Naive thymus-derived CD4-positive, alpha-beta T cell (primary cell): ENCODE measurements at regions of chr5 and their contacts with region 1.

Region 1: GRCh38 chr5:78182790-78183189 is 111.7 kb downstream of the AP3B1 start:
- DNase-seq: no peak
- ATAC-seq: no peak
- H3K4me3 ChIP-seq: no peak overlapping the region
- H3K4me3 Mint-ChIP-seq: no peak overlapping the region
- H3K27ac ChIP-seq: no peak overlapping the region
- H3K27ac Mint-ChIP-seq: no peak overlapping the region
- H3K4me1 ChIP-seq: no peaks in the 10 kb centered on the region
- H3K4me1 Mint-ChIP-seq: peaks cover 3 to 16% (median 7%) of the 10 kb centered on the region in 7 donors
- H3K27me3 ChIP-seq: no peaks in the 10 kb centered on the region
- H3K27me3 Mint-ChIP-seq: no peaks in the 10 kb centered on the region

Region 2: DNA sequence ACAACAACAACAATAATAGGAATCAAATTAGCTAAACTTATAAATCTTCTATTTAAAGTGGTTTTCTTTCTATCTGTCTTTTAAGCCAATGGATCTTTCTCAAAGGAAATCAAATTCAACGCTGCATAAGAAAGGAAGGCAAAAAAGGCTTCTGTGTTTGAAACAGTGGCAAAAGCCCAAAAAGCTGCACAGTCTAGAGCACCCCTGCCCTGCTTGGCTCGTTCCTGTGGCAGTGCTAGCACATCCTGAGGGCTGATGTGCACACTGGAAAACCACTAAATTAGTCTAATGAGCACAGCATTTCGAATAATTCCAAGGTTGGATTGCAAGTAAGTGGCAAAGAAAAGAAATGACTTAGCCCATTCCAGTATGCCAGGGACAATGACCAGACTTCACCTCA is 31.0 kb after region 1 on chr5:
- CTCF ChIA-PET with region 1: no interaction called
- POLR2A ChIA-PET with region 1: no interaction called
- intact Hi-C with region 1: loop called in 1 of 2 experiments (anchors 1 kb)
- DNase-seq: no peak
- ATAC-seq: no peak
- H3K4me3 ChIP-seq: no peak overlapping the region
- H3K4me3 Mint-ChIP-seq: no peak overlapping the region
- H3K27ac ChIP-seq: no peak overlapping the region
- H3K27ac Mint-ChIP-seq: no peak overlapping the region
- H3K4me1 ChIP-seq: no peaks in the 10 kb centered on the region
- H3K4me1 Mint-ChIP-seq: peaks cover 0 to 2% (median 0%) of the 10 kb centered on the region in 7 donors
- H3K27me3 ChIP-seq: no peaks in the 10 kb centered on the region
- H3K27me3 Mint-ChIP-seq: no peaks in the 10 kb centered on the region

Region 3: GRCh38 chr5:78430866-78431265 is 248.1 kb after region 1 on chr5:
- CTCF ChIA-PET with region 1: no interaction called
- POLR2A ChIA-PET with region 1: no interaction called
- intact Hi-C with region 1: no loop called
- DNase-seq: no peak
- ATAC-seq: no peak
- H3K4me3 ChIP-seq: no peak overlapping the region
- H3K4me3 Mint-ChIP-seq: no peak overlapping the region
- H3K27ac ChIP-seq: no peak overlapping the region
- H3K27ac Mint-ChIP-seq: no peak overlapping the region
- H3K4me1 ChIP-seq: no peaks in the 10 kb centered on the region
- H3K4me1 Mint-ChIP-seq: peaks cover 0 to 12% (median 3%) of the 10 kb centered on the region in 7 donors
- H3K27me3 ChIP-seq: no peaks in the 10 kb centered on the region
- H3K27me3 Mint-ChIP-seq: no peaks in the 10 kb centered on the region